Heart left ventricle (tissue), 16 donors: ENCODE measurements at regions of chrX and their contacts with region 1.

Region 1: DNA sequence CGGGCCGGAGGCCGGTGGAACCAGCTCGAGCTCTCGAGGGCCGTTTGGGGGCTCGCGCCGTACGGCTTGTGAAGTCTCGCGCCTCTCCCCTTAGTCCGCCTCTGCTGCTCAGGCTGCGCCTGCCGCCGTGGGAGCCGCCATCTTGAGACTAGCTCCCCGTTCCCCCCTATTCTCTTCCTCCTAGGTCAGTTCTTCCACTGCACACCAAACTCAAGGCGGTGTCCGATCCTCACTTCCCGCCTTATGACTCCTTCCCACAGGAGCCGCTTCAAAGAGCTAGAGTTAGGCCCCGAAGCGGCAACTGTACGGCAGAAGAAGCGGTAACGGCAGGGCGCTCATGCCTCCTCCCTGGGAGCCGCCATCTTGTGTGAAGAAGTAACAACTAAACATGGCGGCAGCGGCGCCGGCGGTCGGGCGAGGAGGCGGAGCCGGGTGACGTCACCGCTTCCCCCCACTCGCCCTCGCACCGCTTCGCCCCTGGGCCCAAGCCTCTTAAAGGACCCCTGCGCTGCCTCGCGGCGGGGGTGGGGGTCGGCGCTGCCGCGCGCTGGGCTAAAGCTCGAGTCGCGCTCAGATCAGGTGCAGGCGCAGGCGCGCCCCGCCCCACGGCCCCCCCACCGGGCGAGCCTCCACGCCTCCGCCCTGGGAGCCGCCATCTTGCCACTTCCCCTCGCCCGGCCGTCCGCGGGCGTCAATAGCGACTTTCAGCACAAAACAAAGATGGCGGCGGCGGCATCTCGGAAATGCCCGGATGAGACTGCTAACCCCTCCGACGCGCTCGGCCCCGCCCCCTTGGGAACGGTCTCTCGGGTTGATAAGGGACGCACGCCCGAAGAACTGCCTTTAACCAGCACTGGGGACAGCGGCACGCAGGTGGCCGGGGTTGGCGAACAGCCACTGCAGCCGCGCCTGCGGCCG is at the start of gene HCFC1:
- DNase-seq: peak; percentile 91 to 97 (median 93)
- ATAC-seq: peak; percentile 56 to 76 (median 72)
- H3K4me3 ChIP-seq: peak within 1 kb of the TSS; percentile 43 to 95 (median 90)
- H3K27ac ChIP-seq: peak within 1 kb of the TSS; percentile 94 to 100 (median 100)
- H3K4me1 ChIP-seq: peaks cover 0 to 57% (median 37%) of the 10 kb centered on the region in 12 donors
- H3K27me3 ChIP-seq: peaks cover 0 to 8% (median 0%) of the 10 kb centered on the region in 9 donors
- CTCF ChIP-seq: no peak
- POLR2A ChIP-seq: peak; percentile 3 to 38
- total RNA-seq, gene HCFC1: 22.7 to 72.6 (median 34.8) TPM

Region 2: GRCh38 chrX:154097597-154098541 is 126.2 kb after region 1 on chrX and contains the start of gene MECP2:
- intact Hi-C with region 1: loop called in 1 of 10 experiments (anchors 5 kb)
- DNase-seq: peak; percentile 91 to 94 (median 92)
- ATAC-seq: peak; percentile 82 to 95 (median 93)
- H3K4me3 ChIP-seq: peak within 1 kb of the TSS; percentile 54 to 94 (median 78)
- H3K27ac ChIP-seq: peak within 1 kb of the TSS; percentile 90 to 99 (median 96)
- H3K4me1 ChIP-seq: peaks cover 0 to 41% (median 26%) of the 10 kb centered on the region in 12 donors
- H3K27me3 ChIP-seq: peaks cover 0 to 32% (median 0%) of the 10 kb centered on the region in 9 donors
- CTCF ChIP-seq: no peak
- POLR2A ChIP-seq: no peak
- total RNA-seq, gene MECP2: 24.6 to 83.3 (median 37.1) TPM

Region 3: DNA sequence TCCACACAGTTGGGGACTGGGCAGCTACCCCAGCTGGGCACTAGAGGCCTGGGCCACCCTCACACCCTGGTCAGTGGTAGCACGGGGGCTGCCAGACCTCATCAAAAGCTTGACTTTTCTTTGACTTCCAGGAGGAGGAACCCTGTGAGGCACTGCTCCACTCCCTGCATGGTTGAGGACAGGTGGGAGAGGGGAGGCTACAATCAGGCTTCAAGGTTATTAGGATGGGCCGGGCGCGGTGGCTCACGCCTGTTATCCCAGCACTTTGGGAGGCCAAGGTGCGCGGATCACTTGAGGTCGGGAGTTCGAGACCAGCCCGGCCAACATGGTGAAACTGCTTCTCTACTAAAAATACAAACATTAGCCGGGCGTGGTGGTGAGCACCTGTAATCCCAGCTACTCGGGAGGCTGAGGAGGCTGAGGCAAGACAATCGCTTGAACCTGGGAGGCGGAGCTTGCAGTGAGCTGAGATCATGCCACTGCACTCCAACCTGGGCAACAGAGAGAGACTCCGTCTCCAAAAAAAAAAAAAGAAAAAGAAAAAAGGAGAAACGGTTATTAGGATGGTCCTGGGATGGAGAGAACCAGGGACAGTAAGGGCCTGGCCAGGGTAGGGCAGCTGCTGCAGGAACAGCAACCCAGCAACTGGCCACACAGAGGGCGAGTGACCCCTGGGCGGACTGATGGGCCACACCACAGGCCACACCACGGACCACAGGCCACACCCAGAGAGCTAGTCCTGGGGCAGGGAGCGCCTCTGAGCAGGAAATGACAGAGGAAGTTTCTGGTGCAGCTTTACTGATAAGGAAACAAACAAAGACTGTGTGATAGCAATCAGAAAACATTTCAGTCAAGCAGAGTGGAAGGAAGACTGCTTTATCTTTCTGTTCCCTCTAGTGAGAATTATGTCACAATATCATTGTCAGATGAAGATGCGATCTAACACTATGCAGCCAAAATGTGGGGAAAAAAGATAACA is 151.8 kb after region 1 on chrX:
- intact Hi-C with region 1: no loop called
- DNase-seq: peak in 3 of 5 donors; percentile 31 to 40 (median 36)
- ATAC-seq: peak; percentile 33 to 91 (median 76)
- H3K4me3 ChIP-seq: no peak overlapping the region
- H3K27ac ChIP-seq: peak overlapping the region in 1 of 12 donors; percentile 25
- H3K4me1 ChIP-seq: peaks cover 0 to 23% (median 0%) of the 10 kb centered on the region in 12 donors
- H3K27me3 ChIP-seq: peaks cover 0 to 31% (median 0%) of the 10 kb centered on the region in 9 donors
- CTCF ChIP-seq: no peak
- POLR2A ChIP-seq: no peak